Natural killer cell (primary cell): ENCODE measurements at regions of chr19 and their contacts with region 1.

Region 1: GRCh38 chr19:8158411-8159074 is 9.2 kb upstream of the FBN3 start:
- DNase-seq: peak; percentile 25 to 86
- ATAC-seq: peak; percentile 82 to 94 (median 90)
- H3K4me3 ChIP-seq: no peak overlapping the region
- H3K4me3 Mint-ChIP-seq: no peak overlapping the region
- H3K27ac ChIP-seq: no peak overlapping the region
- H3K27ac Mint-ChIP-seq: peak overlapping the region in 1 of 2 donors; percentile 61
- H3K4me1 ChIP-seq: no peaks in the 10 kb centered on the region
- H3K4me1 Mint-ChIP-seq: peaks cover 7 to 12% of the 10 kb centered on the region in 2 donors
- H3K27me3 ChIP-seq: peaks cover 3% of the 10 kb centered on the region
- H3K27me3 Mint-ChIP-seq: peaks cover 6 to 8% of the 10 kb centered on the region in 2 donors
- CTCF ChIP-seq: peak; percentile 77

Region 2: DNA sequence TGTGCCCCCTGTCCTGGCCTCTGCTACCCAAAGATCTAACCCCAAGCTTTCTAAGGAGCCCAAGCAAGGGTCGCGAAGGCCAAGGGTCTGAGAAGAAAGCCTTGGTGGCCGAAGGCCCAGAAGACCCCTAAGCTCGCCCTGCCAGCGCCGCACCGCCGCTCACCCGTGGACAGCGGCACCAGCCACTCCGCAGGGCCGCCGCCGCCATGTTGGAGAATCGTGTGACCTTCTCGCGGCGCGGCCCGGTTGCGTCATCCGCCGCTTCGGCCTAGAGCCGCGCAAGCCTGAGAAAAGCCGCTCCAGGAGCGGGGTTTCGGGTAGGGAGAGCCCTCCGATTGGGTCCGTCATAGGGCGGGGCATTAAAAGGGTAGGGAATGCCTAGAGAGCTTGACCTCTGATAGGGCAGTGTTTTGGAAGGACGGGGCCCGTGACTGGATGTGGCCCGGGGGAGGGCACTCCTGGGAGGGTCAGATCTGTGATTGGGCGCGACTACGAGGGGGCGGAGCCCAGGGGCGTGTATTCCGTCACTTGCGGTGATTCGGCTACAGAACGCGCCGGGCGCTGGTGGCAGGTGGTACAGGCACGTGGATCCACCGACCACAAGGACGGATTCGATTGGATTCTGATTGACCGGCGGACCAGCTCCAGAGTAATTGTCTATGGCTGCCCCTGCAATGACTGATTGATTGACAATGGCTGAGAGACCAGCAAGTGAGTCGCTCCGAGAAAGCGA is 214.9 kb before region 1 on chr19 and contains the start of gene TIMM44:
- intact Hi-C with region 1: loop called (anchors 1 kb)
- DNase-seq: peak; percentile 98 to 99
- ATAC-seq: peak; percentile 93 to 98 (median 94)
- H3K4me3 ChIP-seq: peak within 1 kb of the TSS; percentile 91
- H3K4me3 Mint-ChIP-seq: peak within 1 kb of the TSS; percentile 95
- H3K27ac ChIP-seq: peak within 1 kb of the TSS; percentile 97
- H3K27ac Mint-ChIP-seq: peak within 1 kb of the TSS; percentile 98 to 100
- H3K4me1 ChIP-seq: peaks cover 20% of the 10 kb centered on the region
- H3K4me1 Mint-ChIP-seq: peaks cover 15 to 34% of the 10 kb centered on the region in 2 donors
- H3K27me3 ChIP-seq: no peaks in the 10 kb centered on the region
- H3K27me3 Mint-ChIP-seq: peaks cover 0 to 4% of the 10 kb centered on the region in 2 donors
- CTCF ChIP-seq: no peak
- total RNA-seq, gene TIMM44: 83.3 to 116 (median 89.4) TPM

Region 3: DNA sequence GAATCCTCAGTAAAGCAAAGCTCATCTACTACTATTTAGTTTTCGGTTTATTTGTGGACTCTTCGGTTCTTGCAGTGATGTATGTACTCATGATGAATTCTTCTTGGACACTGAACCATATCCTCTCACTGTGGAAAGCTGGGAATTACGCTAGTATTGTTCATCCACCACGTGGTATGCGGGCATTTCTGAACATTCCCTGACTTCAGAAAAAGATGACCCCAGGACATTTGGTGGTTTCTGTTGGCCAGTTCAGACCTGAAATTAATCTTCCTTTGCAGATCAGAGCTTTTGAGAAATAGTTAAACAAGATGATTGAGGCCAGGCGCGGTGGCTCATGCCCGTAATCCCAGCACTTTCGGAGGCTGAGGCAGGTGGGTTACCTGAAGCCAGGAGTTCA is 16.2 kb after region 1 on chr19:
- intact Hi-C with region 1: loop called (anchors 1 kb)
- DNase-seq: no peak
- ATAC-seq: no peak
- H3K4me3 ChIP-seq: no peak overlapping the region
- H3K4me3 Mint-ChIP-seq: no peak overlapping the region
- H3K27ac ChIP-seq: no peak overlapping the region
- H3K27ac Mint-ChIP-seq: no peak overlapping the region
- H3K4me1 ChIP-seq: no peaks in the 10 kb centered on the region
- H3K4me1 Mint-ChIP-seq: no peaks in the 10 kb centered on the region
- H3K27me3 ChIP-seq: no peaks in the 10 kb centered on the region
- H3K27me3 Mint-ChIP-seq: no peaks in the 10 kb centered on the region
- CTCF ChIP-seq: no peak

Region 4: DNA sequence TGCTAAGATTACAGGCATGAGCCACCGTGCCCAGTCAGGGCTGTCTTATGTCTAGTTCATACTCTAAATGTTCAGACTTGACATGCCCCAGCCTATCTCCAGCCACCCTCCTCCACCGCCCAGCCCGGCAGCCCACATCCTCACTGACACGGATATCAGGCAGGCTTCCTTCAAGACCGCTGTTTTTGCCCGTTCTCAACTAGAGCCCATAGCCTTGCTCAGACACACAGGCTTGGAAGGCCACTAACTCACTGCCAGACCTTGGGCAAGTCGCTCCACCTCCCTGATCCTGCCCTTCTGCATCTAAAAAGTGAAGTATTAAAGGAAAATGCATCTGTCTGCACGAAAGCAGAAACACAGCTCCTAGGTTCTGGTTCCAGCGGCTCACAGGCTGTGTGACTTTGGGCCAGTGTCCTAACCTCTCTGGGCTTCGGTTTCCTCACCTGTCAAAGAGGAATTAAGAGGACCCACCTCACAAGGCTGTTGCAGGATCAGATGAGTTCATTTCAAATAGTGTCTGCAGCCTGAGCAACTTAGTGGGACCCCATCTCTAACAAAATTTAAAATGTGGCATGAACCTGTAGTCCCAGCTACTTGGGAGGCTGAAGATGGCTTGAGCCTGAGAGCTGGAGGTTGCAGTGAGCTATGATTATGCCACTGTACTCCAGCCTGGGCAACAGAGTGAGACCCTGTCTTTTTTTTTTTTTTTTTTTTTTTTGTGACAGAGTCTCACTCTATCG is 36.2 kb after region 1 on chr19:
- intact Hi-C with region 1: loop called (anchors 5 kb)
- DNase-seq: peak; percentile 70 to 75
- ATAC-seq: peak; percentile 58 to 83 (median 63)
- H3K4me3 ChIP-seq: peak overlapping the region; percentile 22
- H3K4me3 Mint-ChIP-seq: peak overlapping the region; percentile 85
- H3K27ac ChIP-seq: peak overlapping the region; percentile 86
- H3K27ac Mint-ChIP-seq: peak overlapping the region; percentile 98
- H3K4me1 ChIP-seq: peaks cover 52% of the 10 kb centered on the region
- H3K4me1 Mint-ChIP-seq: peaks cover 53 to 59% of the 10 kb centered on the region in 2 donors
- H3K27me3 ChIP-seq: no peaks in the 10 kb centered on the region
- H3K27me3 Mint-ChIP-seq: no peaks in the 10 kb centered on the region
- CTCF ChIP-seq: no peak

Region 5: GRCh38 chr19:8208922-8209461 is 50.4 kb after region 1 on chr19 and contains the start of gene CERS4:
- intact Hi-C with region 1: loop called (anchors 5 kb)
- DNase-seq: peak; percentile 76 to 81
- ATAC-seq: peak; percentile 79 to 92 (median 79)
- H3K4me3 ChIP-seq: peak within 1 kb of the TSS; percentile 63
- H3K4me3 Mint-ChIP-seq: peak within 1 kb of the TSS; percentile 92
- H3K27ac ChIP-seq: peak within 1 kb of the TSS; percentile 90
- H3K27ac Mint-ChIP-seq: peak within 1 kb of the TSS; percentile 97 to 100
- H3K4me1 ChIP-seq: peaks cover 33% of the 10 kb centered on the region
- H3K4me1 Mint-ChIP-seq: peaks cover 24 to 43% of the 10 kb centered on the region in 2 donors
- H3K27me3 ChIP-seq: no peaks in the 10 kb centered on the region
- H3K27me3 Mint-ChIP-seq: no peaks in the 10 kb centered on the region
- CTCF ChIP-seq: no peak
- total RNA-seq, gene CERS4: 50.0 to 70.8 (median 69.8) TPM

Region 6: GRCh38 chr19:8252922-8253589 is 94.5 kb after region 1 on chr19:
- intact Hi-C with region 1: loop called (anchors 1 kb)
- DNase-seq: peak; percentile 86 to 90
- ATAC-seq: peak; percentile 85 to 98 (median 95)
- H3K4me3 ChIP-seq: no peak overlapping the region
- H3K4me3 Mint-ChIP-seq: no peak overlapping the region
- H3K27ac ChIP-seq: no peak overlapping the region
- H3K27ac Mint-ChIP-seq: peak overlapping the region in 1 of 2 donors; percentile 80
- H3K4me1 ChIP-seq: peaks cover 8% of the 10 kb centered on the region
- H3K4me1 Mint-ChIP-seq: peaks cover 5 to 18% of the 10 kb centered on the region in 2 donors
- H3K27me3 ChIP-seq: no peaks in the 10 kb centered on the region
- H3K27me3 Mint-ChIP-seq: no peaks in the 10 kb centered on the region
- CTCF ChIP-seq: peak; percentile 91